ENCODE measurements at regions of chr2 and their contacts with region 1.

Region 1: GRCh38 chr2:136255648-136256463 is 137.9 kb upstream of the CXCR4 start:
- DNase-seq: no peak
- H3K4me3 ChIP-seq: no peak overlapping the region
- H3K27ac ChIP-seq: no peak overlapping the region
- H3K4me1 ChIP-seq: peaks cover 0 to 5% of the 10 kb centered on the region in 2 donors
- H3K27me3 ChIP-seq: no peaks in the 10 kb centered on the region
- CTCF ChIP-seq: no peak
- POLR2A ChIP-seq: no peak

Region 2: DNA sequence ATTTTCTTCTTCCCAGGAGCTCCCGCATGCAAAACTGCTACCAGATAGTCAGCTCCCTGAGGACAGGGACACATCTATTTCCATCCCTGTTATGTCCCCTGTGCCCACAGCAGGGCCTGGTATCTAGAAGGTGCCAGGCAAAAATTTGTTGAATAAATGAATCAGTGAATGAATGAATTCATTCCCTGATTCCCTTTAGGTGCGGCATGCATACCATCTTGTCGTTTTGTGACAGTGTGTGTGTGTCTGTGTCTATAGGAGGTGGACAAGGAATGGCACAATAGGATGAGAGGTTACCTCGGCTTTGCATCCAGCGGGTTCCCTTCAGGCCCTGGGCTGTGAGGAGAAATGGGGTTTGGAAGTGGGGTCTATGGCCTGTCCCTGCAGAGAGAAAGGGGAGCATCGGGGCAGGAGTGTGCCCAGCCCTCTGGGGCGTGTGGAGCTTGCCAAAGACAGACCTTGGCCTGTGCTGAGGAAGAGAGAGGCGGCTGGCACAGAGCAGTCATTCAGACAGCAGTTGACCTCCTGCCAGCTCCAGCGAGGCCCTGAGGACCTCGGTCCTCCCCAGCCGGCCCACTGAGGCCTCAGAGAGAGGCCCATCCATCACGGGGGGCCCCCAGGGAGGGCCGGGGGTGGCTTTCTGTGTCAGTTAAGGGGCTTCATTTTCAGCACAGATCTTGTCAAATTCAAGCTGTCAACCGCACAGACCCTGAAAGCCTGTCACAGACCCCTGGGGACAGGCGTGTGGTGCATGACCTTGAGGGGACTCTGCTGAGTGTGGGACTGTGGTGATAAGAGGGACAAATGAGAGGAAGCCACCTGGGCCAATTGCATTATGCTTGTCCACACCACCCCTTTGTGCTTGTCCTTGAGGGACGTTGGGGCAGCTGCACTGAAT is 12.0 kb before region 1 on chr2:
- intact Hi-C with region 1: loop called (anchors 1 kb)
- DNase-seq: peak in 1 of 2 donors; percentile 25
- H3K4me3 ChIP-seq: no peak overlapping the region
- H3K27ac ChIP-seq: no peak overlapping the region
- H3K4me1 ChIP-seq: no peaks in the 10 kb centered on the region
- H3K27me3 ChIP-seq: no peaks in the 10 kb centered on the region
- CTCF ChIP-seq: no peak
- POLR2A ChIP-seq: no peak

Region 3: DNA sequence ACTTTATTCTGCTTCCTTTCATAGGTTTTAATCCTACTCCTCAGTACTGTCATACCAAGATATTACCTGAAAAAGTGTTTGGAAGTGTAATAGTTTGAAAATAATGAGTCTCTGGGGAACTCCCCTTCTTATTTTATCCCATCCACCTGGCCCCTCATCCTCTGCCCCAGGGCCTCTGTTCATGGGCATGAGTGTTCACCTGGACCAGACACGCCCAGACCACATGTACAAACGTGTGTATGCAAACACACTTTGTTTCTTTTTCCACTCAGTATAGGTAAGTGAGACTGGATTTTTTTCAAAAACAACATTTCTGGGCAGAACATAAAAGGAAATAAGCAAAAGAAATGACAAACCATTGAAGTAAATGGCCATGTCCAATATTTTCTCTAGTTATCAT is 447.4 kb after region 1 on chr2:
- intact Hi-C with region 1: no loop called
- DNase-seq: no peak
- H3K4me3 ChIP-seq: no peak overlapping the region
- H3K27ac ChIP-seq: no peak overlapping the region
- H3K4me1 ChIP-seq: no peaks in the 10 kb centered on the region
- H3K27me3 ChIP-seq: no peaks in the 10 kb centered on the region
- CTCF ChIP-seq: no peak
- POLR2A ChIP-seq: no peak

Region 4: DNA sequence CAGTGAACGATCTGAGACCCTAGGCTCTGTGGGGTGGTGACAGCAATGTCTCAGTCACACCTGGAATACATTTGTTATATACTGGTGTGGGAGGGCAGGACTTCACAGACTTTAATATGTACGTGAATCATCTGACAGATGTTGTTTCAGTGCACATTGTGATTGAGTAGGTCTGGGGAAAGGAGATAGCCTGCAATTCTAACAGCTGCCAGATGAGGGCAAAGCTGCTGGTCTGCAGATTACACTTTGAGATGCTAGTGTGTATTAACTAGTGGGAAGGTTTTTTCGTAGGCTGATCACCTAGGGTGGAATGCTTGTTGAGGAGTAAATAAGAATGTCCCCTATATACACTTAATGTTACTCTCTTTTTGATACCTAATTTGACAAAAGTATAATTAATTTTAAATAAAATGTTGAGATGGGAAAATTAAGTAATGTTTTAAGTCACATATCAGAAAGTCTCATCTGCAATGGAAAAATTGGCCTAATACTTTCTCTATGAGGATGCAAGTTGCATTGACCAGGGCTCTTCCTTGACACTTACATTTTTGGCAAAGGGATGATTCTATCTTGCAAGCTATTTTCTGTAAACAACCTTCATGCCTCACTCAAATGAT is 1211.5 kb after region 1 on chr2:
- intact Hi-C with region 1: no loop called
- DNase-seq: no peak
- H3K4me3 ChIP-seq: no peak overlapping the region
- H3K27ac ChIP-seq: no peak overlapping the region
- H3K4me1 ChIP-seq: no peaks in the 10 kb centered on the region
- H3K27me3 ChIP-seq: no peaks in the 10 kb centered on the region
- CTCF ChIP-seq: peak in 1 of 3 donors; percentile 33
- POLR2A ChIP-seq: no peak